ENCODE measurements at regions of chr19 and their contacts with region 1.

Region 1: DNA sequence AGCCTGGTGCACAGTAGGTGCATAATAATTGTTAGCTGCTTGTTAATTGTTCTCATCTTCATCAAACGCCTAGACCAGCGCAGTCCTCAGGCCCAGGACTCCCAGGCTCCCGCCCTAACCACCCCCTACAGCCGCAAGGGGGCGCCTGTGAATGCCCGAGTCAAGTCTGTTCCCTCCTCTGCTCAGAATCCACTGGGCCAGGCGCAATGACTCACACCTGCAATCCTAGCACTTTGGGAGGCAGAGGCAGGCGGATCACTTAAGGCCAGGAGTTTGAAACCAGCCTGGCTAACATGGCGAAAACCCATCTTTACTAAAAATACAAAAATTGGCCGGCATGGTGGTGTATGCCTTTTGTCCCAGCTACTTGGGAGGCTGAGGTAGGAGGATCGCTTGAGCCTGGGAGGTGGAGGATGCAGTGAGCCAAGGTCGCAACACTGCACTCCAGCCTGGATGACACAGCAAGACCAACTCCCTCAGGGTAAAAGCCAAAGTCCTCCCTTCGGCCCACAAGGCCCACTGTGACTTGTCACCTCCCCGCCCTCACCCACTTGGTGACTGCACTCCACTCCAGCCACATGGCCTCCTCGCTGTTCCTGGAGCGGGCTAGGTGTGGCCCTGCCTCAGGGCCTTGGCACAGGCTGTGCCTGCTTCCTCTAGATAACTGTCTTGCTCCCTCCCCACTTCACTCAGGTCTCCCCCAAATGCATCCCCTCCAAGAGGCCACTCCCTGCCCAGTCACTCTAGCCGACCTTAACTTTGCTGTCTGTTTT is 9.1 kb downstream of the ZNF653 start:
- DNase-seq: peak; percentile 48 to 79 (median 66)
- H3K4me3 ChIP-seq: no peak overlapping the region
- H3K27ac ChIP-seq: no peak overlapping the region
- H3K4me1 ChIP-seq: no peaks in the 10 kb centered on the region
- H3K27me3 ChIP-seq: no peaks in the 10 kb centered on the region
- CTCF ChIP-seq: peak; percentile 19 to 46 (median 20)
- EP300 ChIP-seq: no peak
- POLR2A ChIP-seq: no peak

Region 2: DNA sequence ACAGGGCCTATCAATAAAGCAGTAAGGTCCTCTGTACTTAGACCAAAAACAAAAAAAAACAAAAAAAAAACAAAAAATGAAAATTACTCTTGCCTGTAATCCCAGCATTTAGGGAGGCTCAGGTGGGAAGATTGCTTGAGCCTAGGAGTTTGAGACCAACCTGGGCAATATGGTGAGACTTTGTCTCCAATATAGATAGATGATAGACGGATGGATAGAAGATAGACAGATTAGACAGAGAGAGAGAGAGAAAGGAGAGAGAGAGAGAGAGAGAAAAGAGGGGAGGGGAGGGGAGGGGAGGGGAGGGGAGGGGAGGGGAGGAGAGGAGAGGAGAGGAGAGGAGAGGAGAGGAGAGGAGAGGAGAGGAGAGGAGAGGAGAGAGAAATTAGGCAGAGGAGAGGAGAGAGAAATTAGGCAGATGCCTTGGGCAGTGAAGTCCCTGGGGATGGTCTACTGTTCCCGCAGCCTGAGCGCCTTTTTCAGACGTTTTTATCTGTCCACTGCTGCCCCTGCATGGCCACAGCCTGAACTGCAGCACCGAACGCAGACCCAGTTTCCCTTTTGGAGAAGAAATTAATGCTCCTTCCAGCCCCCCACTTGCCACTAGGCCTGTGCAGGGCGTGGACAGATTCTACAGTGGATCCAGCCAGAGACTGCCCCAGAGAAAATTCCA is 90.9 kb after region 1 on chr19:
- intact Hi-C with region 1: loop called in 3 of 4 experiments (anchors 5 to 10 kb)
- DNase-seq: peak; percentile 69 to 87 (median 82)
- H3K4me3 ChIP-seq: no peak overlapping the region
- H3K27ac ChIP-seq: no peak overlapping the region
- H3K4me1 ChIP-seq: no peaks in the 10 kb centered on the region
- H3K27me3 ChIP-seq: no peaks in the 10 kb centered on the region
- CTCF ChIP-seq: peak; percentile 76 to 89 (median 83)
- EP300 ChIP-seq: no peak
- POLR2A ChIP-seq: no peak